Left lung (tissue), 14 donors: ENCODE measurements at regions of chr1 and their contacts with region 1.

Region 1: DNA sequence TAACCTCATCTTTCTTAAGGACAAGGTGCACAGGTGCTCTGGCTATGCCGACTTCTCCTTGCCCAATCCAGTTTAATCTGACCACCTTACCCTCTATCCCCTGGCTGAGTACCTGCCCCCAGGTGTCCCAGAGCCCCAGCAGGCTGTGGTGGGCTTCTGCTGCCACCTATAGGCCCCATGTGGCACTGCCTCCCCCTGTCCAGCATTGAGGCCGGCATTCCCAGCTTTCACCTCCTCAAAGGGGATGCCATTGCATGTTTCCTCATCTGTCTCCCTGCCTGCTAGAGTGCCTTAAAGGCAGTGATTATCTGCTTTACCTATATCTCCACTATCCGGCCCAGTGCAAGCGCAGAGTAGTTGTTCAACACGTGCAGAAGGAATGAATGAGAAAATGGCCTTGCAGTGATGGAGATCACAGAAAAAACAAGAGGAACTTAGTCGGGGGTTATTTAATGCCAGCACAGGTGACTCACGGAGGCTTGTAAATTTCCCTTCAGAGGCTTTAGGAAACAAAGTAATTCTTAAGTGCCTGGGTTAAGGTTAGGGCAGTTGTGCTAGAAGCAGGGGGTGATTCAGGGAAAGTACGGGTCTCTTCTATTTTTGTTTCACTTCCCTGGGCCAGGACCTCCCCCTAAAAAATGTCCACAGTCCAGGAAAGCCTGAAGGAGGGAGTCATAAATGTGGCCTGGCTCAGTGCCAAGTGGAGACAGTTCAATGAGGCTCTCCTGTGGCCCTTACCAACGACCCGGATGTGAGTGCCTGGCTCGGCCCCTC is 131.8 kb upstream of the NGF start:
- DNase-seq: peak in 1 of 4 donors; percentile 46
- ATAC-seq: peak; percentile 93
- H3K4me3 ChIP-seq: no peak overlapping the region
- H3K27ac ChIP-seq: no peak overlapping the region
- H3K4me1 ChIP-seq: no peaks in the 10 kb centered on the region
- H3K27me3 ChIP-seq: no peaks in the 10 kb centered on the region
- CTCF ChIP-seq: peak; percentile 72 to 88

Region 2: DNA sequence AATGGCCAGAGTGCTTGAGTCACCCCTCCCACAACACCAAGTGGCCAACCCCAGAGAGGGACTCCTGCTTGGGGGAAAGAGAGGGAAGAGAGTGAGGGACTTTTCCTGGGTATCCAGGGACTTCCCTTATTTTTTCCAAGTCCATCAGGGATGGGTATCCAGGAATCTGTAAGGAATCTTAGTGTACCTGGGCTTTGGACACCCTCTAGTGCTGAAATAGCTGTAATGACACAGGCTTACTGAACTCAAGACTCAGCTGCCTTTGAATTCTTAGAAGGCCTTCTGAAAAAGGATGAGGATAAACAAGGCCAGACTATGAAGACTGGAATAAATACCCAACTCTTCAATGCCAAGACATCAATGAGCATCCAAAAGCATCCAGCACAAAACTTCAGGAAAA is 428.2 kb before region 1 on chr1:
- intact Hi-C with region 1: no loop called
- DNase-seq: no peak
- ATAC-seq: peak; percentile 59
- H3K4me3 ChIP-seq: no peak overlapping the region
- H3K27ac ChIP-seq: no peak overlapping the region
- H3K4me1 ChIP-seq: no peaks in the 10 kb centered on the region
- H3K27me3 ChIP-seq: no peaks in the 10 kb centered on the region
- CTCF ChIP-seq: no peak

Region 3: DNA sequence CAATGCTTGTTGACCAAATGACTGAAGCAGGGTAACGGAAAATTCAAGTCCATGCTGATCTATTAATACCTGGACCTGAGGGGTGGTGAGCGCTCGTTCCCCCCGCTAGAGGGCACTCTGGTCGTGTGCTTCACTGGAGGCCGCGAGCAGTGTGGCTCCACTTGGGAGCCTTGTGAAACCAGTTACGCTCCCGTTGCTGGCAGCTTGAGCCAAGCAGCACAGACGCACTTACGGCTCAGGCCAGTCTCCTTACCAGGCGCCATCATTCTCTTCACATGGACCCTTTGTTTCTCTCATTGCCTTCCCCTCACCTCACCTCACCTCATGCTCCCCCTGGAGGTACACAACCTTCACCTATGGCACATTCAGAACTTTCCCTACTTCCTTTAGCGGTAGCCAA is 330.9 kb before region 1 on chr1:
- intact Hi-C with region 1: loop called in 1 of 2 experiments (anchors 5 kb)
- DNase-seq: peak; percentile 80 to 94 (median 87)
- ATAC-seq: peak; percentile 99
- H3K4me3 ChIP-seq: no peak overlapping the region
- H3K27ac ChIP-seq: no peak overlapping the region
- H3K4me1 ChIP-seq: peaks cover 3 to 4% of the 10 kb centered on the region in 2 donors
- H3K27me3 ChIP-seq: peaks cover 0 to 9% of the 10 kb centered on the region in 2 donors
- CTCF ChIP-seq: peak; percentile 75 to 85

Region 4: GRCh38 chr1:115275212-115275611 is 194.7 kb before region 1 on chr1:
- intact Hi-C with region 1: loop called in 1 of 2 experiments (anchors 10 kb)
- DNase-seq: no peak
- ATAC-seq: peak; percentile 62
- H3K4me3 ChIP-seq: no peak overlapping the region
- H3K27ac ChIP-seq: no peak overlapping the region
- H3K4me1 ChIP-seq: no peaks in the 10 kb centered on the region
- H3K27me3 ChIP-seq: peaks cover 0 to 4% of the 10 kb centered on the region in 2 donors
- CTCF ChIP-seq: peak in 1 of 2 donors; percentile 22

Region 5: GRCh38 chr1:115343200-115343737 is 126.6 kb before region 1 on chr1:
- intact Hi-C with region 1: no loop called
- DNase-seq: no peak
- ATAC-seq: no peak
- H3K4me3 ChIP-seq: no peak overlapping the region
- H3K27ac ChIP-seq: no peak overlapping the region
- H3K4me1 ChIP-seq: peaks cover 0 to 2% of the 10 kb centered on the region in 2 donors
- H3K27me3 ChIP-seq: peaks cover 5 to 15% of the 10 kb centered on the region in 2 donors
- CTCF ChIP-seq: no peak